ENCODE measurements at regions of chr11 and their contacts with region 1.

Region 1: DNA sequence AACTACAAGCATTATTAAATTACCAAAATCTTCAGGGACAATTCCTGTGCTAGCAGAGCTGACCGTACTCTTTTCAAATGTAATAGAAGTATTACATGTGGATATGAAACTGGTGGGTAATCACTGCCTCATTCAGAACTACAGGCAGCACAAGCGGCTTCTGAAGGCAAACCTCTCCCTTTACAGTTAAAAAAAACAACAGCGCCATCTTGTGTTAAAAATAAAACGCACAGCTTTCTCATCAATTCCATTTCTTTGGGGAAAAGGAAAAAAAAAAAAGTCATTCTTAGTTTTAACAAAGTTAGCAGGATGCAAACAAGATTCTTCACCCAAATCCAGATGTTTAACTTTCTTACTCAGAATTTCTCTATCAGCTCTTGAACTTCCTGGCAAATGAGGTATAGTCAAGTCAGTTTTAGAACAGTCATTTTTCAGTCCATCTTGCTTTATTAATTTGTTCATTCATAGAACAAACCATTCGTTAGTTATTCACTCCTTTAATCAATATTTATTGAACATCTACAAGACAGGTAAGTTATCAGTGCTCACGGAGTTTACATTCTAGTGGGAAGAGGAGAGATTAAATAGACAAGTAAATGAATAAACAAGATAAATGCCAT is 331.8 kb upstream of the MPPED2 start:
- DNase-seq: peak in 1 of 2 donors; percentile 15
- ATAC-seq: peak in 6 of 8 donors; percentile 37 to 67 (median 48)
- H3K4me3 ChIP-seq: no peak overlapping the region
- H3K27ac ChIP-seq: no peak overlapping the region
- H3K4me1 ChIP-seq: peaks cover 0 to 6% (median 0%) of the 10 kb centered on the region in 9 donors
- H3K27me3 ChIP-seq: peaks cover 0 to 13% (median 0%) of the 10 kb centered on the region in 7 donors
- CTCF ChIP-seq: peak; percentile 60 to 85 (median 80)

Region 2: DNA sequence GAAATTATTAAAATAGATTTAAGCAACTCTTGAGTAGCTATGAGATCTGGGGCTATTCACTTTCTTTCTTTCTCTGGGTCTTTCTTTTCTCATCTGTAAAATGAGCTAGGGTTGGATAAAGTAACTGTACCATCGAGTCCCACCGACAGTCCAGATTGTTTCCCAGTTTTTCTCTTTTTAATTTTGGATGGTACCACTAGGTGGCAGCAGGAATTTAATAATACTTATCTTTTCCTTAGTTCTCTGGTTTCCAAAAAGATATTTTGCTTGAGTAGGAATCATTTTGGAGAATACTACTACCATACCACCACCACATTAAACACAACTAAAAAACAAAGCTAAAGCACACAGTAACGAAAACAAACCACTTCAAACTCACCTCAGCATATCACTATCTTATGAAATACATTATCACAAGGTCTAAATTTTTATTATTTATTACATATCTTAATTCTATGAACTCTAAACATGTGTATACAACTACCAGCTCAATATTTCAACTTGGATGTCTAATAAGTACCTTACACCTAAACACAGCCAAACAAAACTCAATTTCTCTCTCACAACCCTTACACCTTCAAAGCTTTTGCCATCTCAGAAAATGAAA is 1485.1 kb before region 1 on chr11:
- intact Hi-C with region 1: loop called in 4 of 10 experiments (anchors 10 kb)
- DNase-seq: no peak
- ATAC-seq: no peak
- H3K4me3 ChIP-seq: no peak overlapping the region
- H3K27ac ChIP-seq: no peak overlapping the region
- H3K4me1 ChIP-seq: no peaks in the 10 kb centered on the region
- H3K27me3 ChIP-seq: no peaks in the 10 kb centered on the region
- CTCF ChIP-seq: peak in 8 of 9 donors; percentile 14 to 63 (median 52)

Region 3: GRCh38 chr11:30346068-30346688 is 571.8 kb before region 1 on chr11:
- intact Hi-C with region 1: loop called (anchors 1 to 10 kb)
- DNase-seq: peak in 1 of 2 donors; percentile 19
- ATAC-seq: peak in 5 of 8 donors; percentile 25 to 64 (median 62)
- H3K4me3 ChIP-seq: peak overlapping the region in 1 of 10 donors; percentile 13
- H3K27ac ChIP-seq: no peak overlapping the region
- H3K4me1 ChIP-seq: peaks cover 0 to 4% (median 0%) of the 10 kb centered on the region in 9 donors
- H3K27me3 ChIP-seq: no peaks in the 10 kb centered on the region
- CTCF ChIP-seq: peak; percentile 48 to 83 (median 67)

Region 4: GRCh38 chr11:30358536-30358935 is 559.4 kb before region 1 on chr11:
- intact Hi-C with region 1: loop called in 1 of 10 experiments (anchors 10 kb)
- DNase-seq: peak in 1 of 2 donors; percentile 39
- ATAC-seq: peak in 5 of 8 donors; percentile 33 to 75 (median 62)
- H3K4me3 ChIP-seq: no peak overlapping the region
- H3K27ac ChIP-seq: peak overlapping the region in 2 of 10 donors; percentile 33 to 46
- H3K4me1 ChIP-seq: peaks cover 0 to 16% (median 0%) of the 10 kb centered on the region in 9 donors
- H3K27me3 ChIP-seq: no peaks in the 10 kb centered on the region
- CTCF ChIP-seq: no peak

Region 5: GRCh38 chr11:30553521-30554118 is 364.3 kb before region 1 on chr11:
- intact Hi-C with region 1: no loop called
- DNase-seq: no peak
- ATAC-seq: no peak
- H3K4me3 ChIP-seq: no peak overlapping the region
- H3K27ac ChIP-seq: no peak overlapping the region
- H3K4me1 ChIP-seq: peaks cover 0 to 9% (median 0%) of the 10 kb centered on the region in 9 donors
- H3K27me3 ChIP-seq: no peaks in the 10 kb centered on the region
- CTCF ChIP-seq: no peak

Region 6: DNA sequence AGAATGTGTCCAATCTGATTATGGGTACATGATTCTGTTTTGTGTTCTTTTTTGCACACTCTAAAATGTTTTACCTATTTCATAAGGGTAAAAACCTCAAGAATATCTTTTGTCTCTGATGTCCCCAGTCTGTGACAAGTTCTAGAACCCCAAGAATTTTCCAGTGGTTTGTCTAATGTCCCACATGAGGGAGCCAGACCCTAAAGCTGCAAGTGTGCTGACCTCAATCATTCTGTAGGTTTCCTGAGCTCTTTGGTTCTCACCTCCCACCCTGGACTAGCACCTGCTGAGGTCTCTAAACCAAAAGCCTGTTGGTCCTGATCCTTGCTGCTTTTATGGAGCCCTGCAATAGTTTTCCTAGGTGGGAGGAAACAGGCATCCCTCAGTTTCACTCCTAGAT is 182.0 kb before region 1 on chr11:
- intact Hi-C with region 1: loop called in 2 of 10 experiments (anchors 5 to 10 kb)
- DNase-seq: no peak
- ATAC-seq: no peak
- H3K4me3 ChIP-seq: no peak overlapping the region
- H3K27ac ChIP-seq: no peak overlapping the region
- H3K4me1 ChIP-seq: no peaks in the 10 kb centered on the region
- H3K27me3 ChIP-seq: peaks cover 0 to 6% (median 0%) of the 10 kb centered on the region in 7 donors
- CTCF ChIP-seq: peak in 4 of 9 donors; percentile 8 to 37 (median 24)

Region 7: DNA sequence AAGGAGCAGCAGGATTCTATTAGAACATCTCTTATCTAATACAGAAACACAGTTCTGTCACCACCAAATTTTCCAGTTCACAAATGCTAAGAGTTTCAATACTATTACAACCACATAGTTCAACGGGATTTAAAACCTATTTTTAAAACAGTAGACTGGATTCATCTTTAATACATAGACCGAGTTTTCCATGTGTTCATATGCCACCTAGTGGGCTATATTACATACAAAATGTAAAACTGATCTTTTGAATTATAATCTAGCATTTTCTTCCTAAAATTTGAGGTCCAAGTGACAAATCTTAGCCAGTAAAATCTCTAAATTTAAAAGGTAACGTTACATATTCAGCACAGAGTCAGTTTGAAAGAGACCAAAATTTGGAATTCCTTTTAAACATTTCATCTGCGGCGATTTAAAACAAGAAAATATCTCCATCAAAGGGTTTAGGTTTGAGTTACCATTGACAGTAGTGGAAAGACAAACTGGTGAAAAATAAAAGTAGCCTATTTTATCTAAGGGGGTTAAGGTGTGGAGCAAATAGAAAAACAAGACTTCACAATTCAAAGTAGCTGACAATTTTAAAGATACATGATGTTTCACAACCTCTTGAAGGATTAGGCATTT is 62.5 kb before region 1 on chr11:
- intact Hi-C with region 1: loop called in 7 of 10 experiments (anchors 5 to 10 kb)
- DNase-seq: no peak
- ATAC-seq: peak in 1 of 8 donors; percentile 55
- H3K4me3 ChIP-seq: no peak overlapping the region
- H3K27ac ChIP-seq: no peak overlapping the region
- H3K4me1 ChIP-seq: peaks cover 0 to 4% (median 0%) of the 10 kb centered on the region in 9 donors
- H3K27me3 ChIP-seq: no peaks in the 10 kb centered on the region
- CTCF ChIP-seq: peak in 8 of 9 donors; percentile 33 to 77 (median 62)

Region 8: DNA sequence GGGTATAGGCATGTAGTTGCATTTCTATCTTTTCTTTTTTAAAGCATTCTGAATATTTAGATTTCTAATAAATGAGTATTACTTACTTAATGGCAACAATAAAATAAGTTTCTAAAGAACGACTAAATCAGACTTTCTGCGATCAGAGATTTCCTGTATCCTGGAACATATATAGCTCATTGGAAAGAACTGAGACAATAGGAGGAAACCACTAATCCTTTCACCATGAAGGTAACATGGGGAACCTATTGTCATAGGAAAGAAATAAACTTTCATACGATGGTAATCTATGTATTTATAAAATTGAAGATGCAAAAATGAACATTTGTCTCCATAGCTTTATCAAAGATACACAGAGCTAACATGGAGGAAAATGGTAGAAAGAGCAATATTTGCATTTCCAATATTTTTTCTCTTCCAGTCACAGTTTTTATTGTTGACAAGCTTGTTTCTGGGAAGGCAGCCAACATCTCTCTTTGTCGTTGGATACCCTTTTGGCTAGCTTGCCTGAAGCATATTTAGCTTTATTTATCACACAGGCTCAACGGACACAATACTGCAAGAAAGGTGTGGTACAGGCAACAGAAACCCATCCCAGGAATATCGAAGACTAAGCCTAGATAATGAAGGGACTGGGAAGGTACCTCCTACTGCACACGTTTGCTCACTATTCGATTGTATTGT is 38.5 kb before region 1 on chr11:
- intact Hi-C with region 1: loop called in 2 of 10 experiments (anchors 5 kb)
- DNase-seq: peak in 1 of 2 donors; percentile 81
- ATAC-seq: peak; percentile 80 to 94 (median 90)
- H3K4me3 ChIP-seq: peak overlapping the region in 1 of 10 donors; percentile 30
- H3K27ac ChIP-seq: peak overlapping the region in 9 of 10 donors; percentile 6 to 72 (median 57)
- H3K4me1 ChIP-seq: peaks cover 4 to 64% (median 36%) of the 10 kb centered on the region in 9 donors
- H3K27me3 ChIP-seq: no peaks in the 10 kb centered on the region
- CTCF ChIP-seq: no peak

Region 9: GRCh38 chr11:30960387-30960992 is 42.5 kb after region 1 on chr11:
- intact Hi-C with region 1: no loop called
- DNase-seq: no peak
- ATAC-seq: peak in 1 of 8 donors; percentile 25
- H3K4me3 ChIP-seq: no peak overlapping the region
- H3K27ac ChIP-seq: no peak overlapping the region
- H3K4me1 ChIP-seq: no peaks in the 10 kb centered on the region
- H3K27me3 ChIP-seq: peaks cover 0 to 7% (median 0%) of the 10 kb centered on the region in 7 donors
- CTCF ChIP-seq: peak; percentile 15 to 73 (median 49)